H1 (cell line): ENCODE measurements at regions of chr4 and their contacts with region 1.

Region 1: GRCh38 chr4:24988776-24989175 is 42.0 kb downstream of the LGI2 start:
- DNase-seq: peak; percentile 65 to 67
- H3K4me3 ChIP-seq: peak overlapping the region in 1 of 4 experiments; percentile 23; a peak in 1 of 8 replicates
- H3K27ac ChIP-seq: no peak overlapping the region
- H3K4me1 ChIP-seq: peaks cover 0 to 11% (median 2%) of the 10 kb centered on the region in 4 experiments; a peak in 6 of 7 replicates
- H3K27me3 ChIP-seq: no peaks in the 10 kb centered on the region
- CTCF ChIP-seq: peak; percentile 46 to 88 (median 80)
- EP300 ChIP-seq: no peak
- POLR2A ChIP-seq: no peak
- RAD21 ChIP-seq: peak; percentile 94 to 97

Region 2: GRCh38 chr4:24816797-24817196 is 172.0 kb before region 1 on chr4:
- CTCF ChIA-PET with region 1: no interaction called
- POLR2A ChIA-PET with region 1: no interaction called
- DNase-seq: no peak
- H3K4me3 ChIP-seq: no peak overlapping the region
- H3K27ac ChIP-seq: no peak overlapping the region
- H3K4me1 ChIP-seq: no peaks in the 10 kb centered on the region; a peak in 1 of 7 replicates
- H3K27me3 ChIP-seq: no peaks in the 10 kb centered on the region
- CTCF ChIP-seq: no peak
- EP300 ChIP-seq: no peak
- POLR2A ChIP-seq: no peak
- RAD21 ChIP-seq: no peak

Region 3: GRCh38 chr4:24973733-24974601 is 14.8 kb before region 1 on chr4:
- CTCF ChIA-PET with region 1: interaction called, 15 read pairs
- POLR2A ChIA-PET with region 1: no interaction called
- DNase-seq: no peak
- H3K4me3 ChIP-seq: no peak overlapping the region
- H3K27ac ChIP-seq: no peak overlapping the region
- H3K4me1 ChIP-seq: peaks cover 0 to 2% (median 0%) of the 10 kb centered on the region in 4 experiments; a peak in 1 of 7 replicates
- H3K27me3 ChIP-seq: no peaks in the 10 kb centered on the region
- CTCF ChIP-seq: no peak
- EP300 ChIP-seq: no peak
- POLR2A ChIP-seq: no peak
- RAD21 ChIP-seq: no peak

Region 4: GRCh38 chr4:24999392-25000089 is 10.8 kb after region 1 on chr4:
- CTCF ChIA-PET with region 1: interaction called, 20 read pairs
- POLR2A ChIA-PET with region 1: no interaction called
- DNase-seq: no peak
- H3K4me3 ChIP-seq: no peak overlapping the region
- H3K27ac ChIP-seq: no peak overlapping the region
- H3K4me1 ChIP-seq: peaks cover 0 to 9% (median 0%) of the 10 kb centered on the region in 4 experiments; a peak in 1 of 7 replicates
- H3K27me3 ChIP-seq: no peaks in the 10 kb centered on the region
- CTCF ChIP-seq: no peak
- EP300 ChIP-seq: no peak
- POLR2A ChIP-seq: no peak
- RAD21 ChIP-seq: no peak